ENCODE measurements at regions of chr6 and their contacts with region 1.

Region 1: DNA sequence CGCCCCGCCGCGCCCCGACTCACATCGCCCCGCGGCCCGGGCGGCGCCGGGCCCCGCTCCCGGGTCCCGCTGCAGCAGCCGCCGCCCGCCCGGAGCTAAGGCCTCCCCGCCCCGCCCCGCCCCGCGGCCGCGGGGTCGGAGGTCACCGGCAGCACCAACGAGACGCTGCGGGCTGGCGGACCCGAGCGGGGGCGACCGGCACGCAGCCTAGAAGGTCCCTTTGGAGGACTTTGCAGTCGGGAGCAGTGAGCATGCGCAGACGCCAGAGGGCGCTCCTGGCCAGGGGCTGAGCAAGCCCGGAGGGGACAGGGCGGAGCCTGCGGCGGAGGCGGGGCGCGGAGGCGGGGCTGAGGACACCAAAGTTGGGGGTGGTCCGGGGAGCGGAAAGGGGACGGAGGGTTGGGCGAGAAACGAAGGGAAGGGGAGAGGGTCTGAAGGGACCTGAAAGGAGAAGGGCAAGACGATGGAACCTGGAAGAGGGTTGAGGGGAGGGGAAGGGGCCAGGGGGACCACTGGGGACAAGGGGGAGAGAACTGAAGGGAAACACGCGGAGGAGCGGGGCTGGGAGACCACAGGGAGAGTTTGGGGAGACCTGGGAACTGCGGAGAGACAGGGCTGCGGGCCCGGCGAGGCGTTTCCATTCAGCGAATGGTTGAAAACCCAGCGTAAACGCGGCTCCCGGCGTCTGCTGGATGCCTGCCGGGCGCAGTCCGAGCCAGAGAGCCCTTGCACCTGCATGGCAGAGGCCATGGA is at the start of gene FRS3:
- DNase-seq: peak; percentile 100
- total RNA-seq, gene FRS3: 5.7 TPM

Region 2: GRCh38 chr6:41367700-41368099 is 412.3 kb before region 1 on chr6:
- intact Hi-C with region 1: loop called (anchors 5 kb)
- DNase-seq: peak; percentile 74

Region 3: GRCh38 chr6:41602864-41603608 is 176.9 kb before region 1 on chr6:
- intact Hi-C with region 1: loop called (anchors 2 kb)
- DNase-seq: peak; percentile 90

Region 4: DNA sequence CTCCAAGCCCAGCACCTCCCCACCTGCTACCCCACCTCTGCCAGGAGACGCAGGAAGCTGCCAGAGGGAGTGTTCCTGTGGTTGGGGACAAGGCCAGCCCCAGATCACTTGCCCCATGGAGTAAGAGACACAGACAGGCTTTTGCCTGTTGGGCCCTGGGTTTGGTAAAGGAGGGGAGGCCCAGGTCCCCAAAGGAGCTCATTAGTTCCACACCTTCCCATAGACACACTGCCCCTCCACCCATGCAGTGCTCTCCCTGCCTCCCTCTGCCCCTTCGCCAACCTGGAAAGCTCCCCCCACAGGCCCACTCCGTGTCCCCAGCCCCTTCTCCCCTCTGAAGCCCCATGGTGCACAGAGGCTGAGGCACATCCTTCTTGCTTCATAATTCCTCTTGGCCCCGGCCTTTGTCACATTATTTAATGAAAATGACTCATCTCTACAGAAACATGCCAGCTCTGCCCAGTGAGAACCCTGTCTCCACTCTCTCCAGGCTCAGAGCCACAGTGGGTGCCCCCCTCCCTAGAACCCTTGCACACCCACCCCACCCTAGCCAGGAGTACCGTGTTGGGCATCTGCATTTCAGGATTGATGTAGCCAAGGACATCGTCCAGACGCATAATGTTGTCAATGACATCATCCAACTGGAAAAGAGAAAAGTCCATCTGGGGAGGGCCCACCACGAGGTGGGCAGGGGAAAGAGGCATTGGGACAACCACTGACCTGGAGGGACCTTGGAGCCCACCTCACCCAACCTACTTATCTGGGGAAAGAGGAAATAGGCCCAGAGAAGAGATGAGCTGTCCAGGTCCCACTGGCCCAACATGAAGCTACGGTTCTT is 90.6 kb before region 1 on chr6:
- intact Hi-C with region 1: loop called (anchors 5 kb)
- DNase-seq: no peak

Region 5: GRCh38 chr6:41705996-41706835 is 73.8 kb before region 1 on chr6:
- intact Hi-C with region 1: loop called (anchors 5 kb)
- DNase-seq: peak; percentile 93

Region 6: DNA sequence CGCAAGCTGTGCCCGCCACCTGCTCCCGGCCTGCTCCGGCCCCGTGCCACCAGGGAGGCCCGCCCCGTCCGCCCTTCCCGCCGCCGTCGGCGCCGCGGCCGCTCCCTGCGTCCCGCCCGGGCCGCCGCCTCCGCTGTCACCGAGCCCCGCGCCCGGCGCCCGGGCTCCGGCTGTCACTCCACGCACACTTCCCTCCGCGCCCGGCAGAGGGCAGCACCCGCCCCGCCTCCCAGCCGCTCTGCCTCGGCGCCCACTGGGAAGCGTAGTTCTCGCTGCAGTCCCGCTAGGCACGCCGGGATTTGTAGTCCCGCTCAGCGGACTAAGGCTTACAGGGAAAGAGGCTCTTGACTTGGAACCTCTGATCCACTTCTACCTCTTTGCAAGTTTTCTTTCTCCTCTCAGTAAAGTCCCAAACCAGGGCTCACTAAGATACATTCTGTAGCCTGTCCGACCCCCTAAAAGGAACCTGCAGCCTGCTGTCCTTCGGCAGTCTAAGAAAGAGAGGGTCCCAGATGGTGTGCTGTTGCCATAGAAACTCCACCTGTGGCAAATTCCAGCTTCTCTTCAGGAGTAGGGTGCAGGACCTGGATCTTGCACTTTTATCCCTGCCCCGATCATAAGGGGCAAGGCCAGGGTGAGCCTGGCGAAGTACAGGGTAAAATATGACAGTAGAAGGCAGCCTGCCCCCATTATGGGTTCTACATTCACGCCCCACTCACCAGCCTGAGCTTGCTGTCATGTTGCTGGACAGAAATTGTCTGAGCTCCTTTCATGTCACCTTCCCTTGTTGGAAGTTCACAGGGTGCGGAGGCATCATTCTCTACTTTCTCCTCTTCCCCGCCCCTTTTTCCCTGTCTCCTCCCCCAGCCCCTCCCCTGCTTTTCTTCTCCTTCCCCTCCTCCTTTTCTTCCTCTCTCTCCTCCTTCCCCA is 44.3 kb before region 1 on chr6 and contains the start of gene TFEB:
- intact Hi-C with region 1: loop called (anchors 5 kb)
- DNase-seq: peak; percentile 98
- total RNA-seq, gene TFEB: 45.6 TPM

Region 7: DNA sequence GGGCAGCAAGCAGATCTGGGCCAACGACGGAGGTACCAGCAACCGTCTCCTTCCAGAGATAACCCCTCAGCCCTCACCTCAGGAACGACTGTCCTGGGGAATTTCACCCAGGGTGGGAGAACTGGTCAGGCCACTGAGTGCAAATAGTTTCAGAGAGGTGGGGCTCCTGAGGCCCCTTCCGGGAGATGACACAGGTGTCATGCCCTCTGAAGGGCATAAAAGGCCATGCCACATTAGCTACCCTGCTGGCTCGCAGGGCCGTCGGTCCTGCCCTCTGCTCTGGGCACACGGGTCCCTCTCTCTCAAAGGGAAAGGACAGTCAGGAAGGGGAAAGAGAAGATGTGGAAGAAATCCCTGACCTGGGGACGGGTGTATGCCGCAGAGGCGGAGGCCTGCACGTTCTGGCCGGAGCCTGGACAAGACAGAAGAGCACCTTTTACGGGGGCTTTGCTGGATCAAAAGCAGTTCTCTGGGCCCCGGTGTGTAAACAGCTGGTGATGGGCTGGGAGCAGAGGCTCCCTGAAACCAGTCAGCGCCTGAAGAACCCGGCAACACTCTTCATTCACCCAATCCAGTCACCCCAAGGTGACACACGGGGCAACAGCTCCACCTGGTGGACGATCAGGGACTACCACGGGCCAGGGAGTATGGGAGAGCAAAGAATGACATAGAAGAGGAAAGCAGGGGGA is 264.0 kb after region 1 on chr6:
- intact Hi-C with region 1: loop called (anchors 2 kb)
- DNase-seq: peak; percentile 95